ENCODE measurements at regions of chr6 and their contacts with region 1.

Region 1: GRCh38 chr6:150016324-150017185 is 8.8 kb downstream of the RAET1L start:
- DNase-seq: peak in 13 of 14 experiments; percentile 30 to 84 (median 42)
- ATAC-seq: peak; percentile 92
- H3K4me3 ChIP-seq: no peak overlapping the region
- H3K4me3 Mint-ChIP-seq: no peak overlapping the region
- H3K27ac ChIP-seq: no peak overlapping the region
- H3K27ac Mint-ChIP-seq: no peak overlapping the region
- H3K4me1 ChIP-seq: peaks cover 14% of the 10 kb centered on the region
- H3K4me1 Mint-ChIP-seq: peaks cover 19% of the 10 kb centered on the region
- H3K27me3 ChIP-seq: peaks cover 38 to 53% of the 10 kb centered on the region in 2 experiments
- H3K27me3 Mint-ChIP-seq: peaks cover 82% of the 10 kb centered on the region
- CTCF ChIP-seq: peak; percentile 75

Region 2: DNA sequence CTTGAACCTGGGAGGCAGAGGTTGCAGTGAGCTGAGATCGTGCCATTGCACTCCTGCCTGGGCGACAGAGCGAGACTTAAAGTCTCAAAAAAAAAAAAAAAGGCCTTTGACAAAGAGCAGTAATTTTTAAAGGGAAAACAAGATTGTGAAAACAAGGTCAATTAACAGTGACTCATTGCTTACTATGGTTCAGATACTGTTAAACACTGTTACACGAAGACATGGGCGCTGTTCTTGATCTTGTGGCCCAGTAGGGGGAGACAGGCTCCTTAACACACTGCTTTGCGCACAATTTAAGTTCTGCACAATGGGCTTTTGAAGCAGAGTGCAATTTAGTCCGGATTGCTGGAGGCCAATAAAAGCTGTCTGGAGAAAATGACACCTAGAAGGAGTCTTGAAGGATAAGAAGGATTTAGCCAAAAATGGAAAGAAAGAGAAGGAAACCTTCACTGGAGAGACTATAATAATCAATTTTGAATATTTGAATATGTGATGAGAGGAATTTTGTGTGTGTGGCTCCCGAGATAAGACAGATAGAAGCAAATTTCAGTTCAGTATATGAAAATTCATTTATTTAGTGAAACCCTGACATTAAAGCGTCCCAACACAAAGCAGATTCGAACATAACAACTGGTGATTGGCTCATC is 292.7 kb before region 1 on chr6:
- CTCF ChIA-PET with region 1: no interaction called
- POLR2A ChIA-PET with region 1: no interaction called
- intact Hi-C with region 1: loop called in 1 of 2 experiments (anchors 5 kb)
- DNase-seq: peak in 11 of 14 experiments; percentile 16 to 78 (median 38)
- ATAC-seq: peak; percentile 92
- H3K4me3 ChIP-seq: no peak overlapping the region
- H3K4me3 Mint-ChIP-seq: no peak overlapping the region
- H3K27ac ChIP-seq: no peak overlapping the region
- H3K27ac Mint-ChIP-seq: peak overlapping the region; percentile 10
- H3K4me1 ChIP-seq: peaks cover 8% of the 10 kb centered on the region
- H3K4me1 Mint-ChIP-seq: peaks cover 25% of the 10 kb centered on the region
- H3K27me3 ChIP-seq: no peaks in the 10 kb centered on the region
- H3K27me3 Mint-ChIP-seq: no peaks in the 10 kb centered on the region
- CTCF ChIP-seq: peak; percentile 78

Region 3: GRCh38 chr6:149834513-149835481 is 181.8 kb before region 1 on chr6:
- CTCF ChIA-PET with region 1: no interaction called
- POLR2A ChIA-PET with region 1: no interaction called
- intact Hi-C with region 1: loop called (anchors 1 kb)
- DNase-seq: peak; percentile 41 to 85 (median 71)
- ATAC-seq: peak; percentile 86
- H3K4me3 ChIP-seq: no peak overlapping the region
- H3K4me3 Mint-ChIP-seq: no peak overlapping the region
- H3K27ac ChIP-seq: no peak overlapping the region
- H3K27ac Mint-ChIP-seq: no peak overlapping the region
- H3K4me1 ChIP-seq: no peaks in the 10 kb centered on the region
- H3K4me1 Mint-ChIP-seq: peaks cover 5% of the 10 kb centered on the region
- H3K27me3 ChIP-seq: no peaks in the 10 kb centered on the region
- H3K27me3 Mint-ChIP-seq: no peaks in the 10 kb centered on the region
- CTCF ChIP-seq: peak; percentile 93

Region 4: DNA sequence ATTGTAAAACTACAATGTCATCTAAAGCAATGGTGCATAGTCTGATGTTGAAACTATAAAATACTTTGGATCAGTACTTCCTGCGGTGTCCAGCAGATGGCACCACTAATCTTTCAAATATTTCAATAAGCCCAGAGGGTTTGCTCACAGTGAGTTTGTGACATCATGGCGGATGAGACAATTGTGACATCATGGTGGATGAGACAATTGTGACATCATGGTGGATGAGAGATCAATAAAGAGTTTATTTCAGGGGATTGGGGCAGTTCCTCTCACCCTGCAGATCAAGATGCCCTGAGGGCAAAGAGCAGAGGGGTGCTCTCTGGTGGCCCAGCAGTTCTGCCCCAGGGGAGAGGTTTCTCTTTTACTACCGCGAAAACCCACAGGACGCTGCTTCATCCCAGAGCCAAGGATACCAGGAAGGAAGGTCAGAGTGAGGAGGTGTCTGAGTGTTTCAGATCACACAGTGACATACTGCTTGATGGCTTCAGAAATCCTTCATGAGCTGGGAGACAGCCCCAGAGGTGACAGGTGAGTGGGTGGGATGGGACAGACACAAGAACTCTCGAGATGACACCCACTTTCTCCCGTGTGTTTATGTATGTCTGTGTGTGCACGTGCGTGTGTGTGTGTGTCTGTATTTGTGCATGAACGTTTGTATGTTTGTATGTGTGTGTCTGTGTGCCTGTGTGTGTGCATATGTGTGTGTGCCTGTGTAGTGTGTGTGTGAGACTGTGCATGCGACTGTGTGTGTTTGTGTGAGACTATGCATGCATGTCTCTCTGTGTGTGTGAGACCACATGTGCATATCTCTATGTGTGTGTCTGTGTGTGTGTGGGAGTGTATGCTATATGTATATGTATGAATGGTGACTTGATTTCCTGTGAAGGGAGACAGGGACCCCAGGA is 82.1 kb before region 1 on chr6:
- CTCF ChIA-PET with region 1: interaction called, 10 read pairs
- POLR2A ChIA-PET with region 1: no interaction called
- intact Hi-C with region 1: loop called (anchors 1 kb)
- DNase-seq: peak; percentile 50 to 88 (median 66)
- ATAC-seq: peak; percentile 67
- H3K4me3 ChIP-seq: no peak overlapping the region
- H3K4me3 Mint-ChIP-seq: peak overlapping the region; percentile 7
- H3K27ac ChIP-seq: no peak overlapping the region
- H3K27ac Mint-ChIP-seq: no peak overlapping the region
- H3K4me1 ChIP-seq: peaks cover 20% of the 10 kb centered on the region
- H3K4me1 Mint-ChIP-seq: peaks cover 14% of the 10 kb centered on the region
- H3K27me3 ChIP-seq: peaks cover 56 to 85% of the 10 kb centered on the region in 2 experiments
- H3K27me3 Mint-ChIP-seq: peaks cover 91% of the 10 kb centered on the region
- CTCF ChIP-seq: peak; percentile 89

Region 5: GRCh38 chr6:150004783-150005717 is 11.5 kb before region 1 on chr6:
- CTCF ChIA-PET with region 1: interaction called, 11 read pairs
- POLR2A ChIA-PET with region 1: no interaction called
- intact Hi-C with region 1: no loop called
- DNase-seq: peak; percentile 65 to 95 (median 86)
- ATAC-seq: peak; percentile 77
- H3K4me3 ChIP-seq: peak overlapping the region; percentile 86
- H3K4me3 Mint-ChIP-seq: peak overlapping the region; percentile 87
- H3K27ac ChIP-seq: peak overlapping the region; percentile 75 to 89
- H3K27ac Mint-ChIP-seq: peak overlapping the region; percentile 74
- H3K4me1 ChIP-seq: peaks cover 49% of the 10 kb centered on the region
- H3K4me1 Mint-ChIP-seq: peaks cover 29% of the 10 kb centered on the region
- H3K27me3 ChIP-seq: peaks cover 6 to 15% of the 10 kb centered on the region in 2 experiments
- H3K27me3 Mint-ChIP-seq: peaks cover 24% of the 10 kb centered on the region
- CTCF ChIP-seq: no peak

Region 6: DNA sequence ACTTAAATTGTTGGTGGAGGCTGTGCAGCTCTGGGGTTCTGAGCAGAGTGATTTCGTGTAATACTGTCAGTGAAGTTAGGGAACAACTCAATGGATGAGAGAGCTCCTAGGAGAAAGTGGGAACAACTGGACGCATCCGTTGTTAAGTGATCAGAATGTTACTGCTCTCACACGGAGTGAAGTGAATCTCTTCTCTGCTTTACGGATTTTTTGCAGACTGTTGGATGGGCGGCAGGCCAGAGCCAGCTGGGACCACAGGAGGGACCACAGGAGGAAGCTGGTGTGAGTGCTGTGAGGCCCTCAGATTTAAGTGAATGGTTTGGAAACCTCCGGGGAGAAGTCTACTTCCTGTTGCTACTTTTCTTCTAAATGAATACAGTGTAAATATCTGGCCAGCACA is 102.6 kb after region 1 on chr6:
- CTCF ChIA-PET with region 1: no interaction called
- POLR2A ChIA-PET with region 1: no interaction called
- intact Hi-C with region 1: no loop called
- DNase-seq: no peak
- ATAC-seq: no peak
- H3K4me3 ChIP-seq: no peak overlapping the region
- H3K4me3 Mint-ChIP-seq: no peak overlapping the region
- H3K27ac ChIP-seq: no peak overlapping the region
- H3K27ac Mint-ChIP-seq: no peak overlapping the region
- H3K4me1 ChIP-seq: no peaks in the 10 kb centered on the region
- H3K4me1 Mint-ChIP-seq: no peaks in the 10 kb centered on the region
- H3K27me3 ChIP-seq: no peaks in the 10 kb centered on the region
- H3K27me3 Mint-ChIP-seq: peaks cover 2% of the 10 kb centered on the region
- CTCF ChIP-seq: no peak